Activated CD8-positive, alpha-beta T cell treated with anti-CD3 and anti-CD28 coated beads for 36 hours (primary cell): ENCODE measurements at regions of chr11 and their contacts with region 1.

Region 1: GRCh38 chr11:58719406-58720117 is 12.2 kb downstream of the GLYAT start:
- DNase-seq: no peak
- ATAC-seq: no peak
- H3K4me3 Mint-ChIP-seq: no peak overlapping the region
- H3K27ac Mint-ChIP-seq: no peak overlapping the region
- H3K4me1 Mint-ChIP-seq: no peaks in the 10 kb centered on the region
- H3K27me3 Mint-ChIP-seq: no peaks in the 10 kb centered on the region
- CTCF ChIP-seq: no peak

Region 2: DNA sequence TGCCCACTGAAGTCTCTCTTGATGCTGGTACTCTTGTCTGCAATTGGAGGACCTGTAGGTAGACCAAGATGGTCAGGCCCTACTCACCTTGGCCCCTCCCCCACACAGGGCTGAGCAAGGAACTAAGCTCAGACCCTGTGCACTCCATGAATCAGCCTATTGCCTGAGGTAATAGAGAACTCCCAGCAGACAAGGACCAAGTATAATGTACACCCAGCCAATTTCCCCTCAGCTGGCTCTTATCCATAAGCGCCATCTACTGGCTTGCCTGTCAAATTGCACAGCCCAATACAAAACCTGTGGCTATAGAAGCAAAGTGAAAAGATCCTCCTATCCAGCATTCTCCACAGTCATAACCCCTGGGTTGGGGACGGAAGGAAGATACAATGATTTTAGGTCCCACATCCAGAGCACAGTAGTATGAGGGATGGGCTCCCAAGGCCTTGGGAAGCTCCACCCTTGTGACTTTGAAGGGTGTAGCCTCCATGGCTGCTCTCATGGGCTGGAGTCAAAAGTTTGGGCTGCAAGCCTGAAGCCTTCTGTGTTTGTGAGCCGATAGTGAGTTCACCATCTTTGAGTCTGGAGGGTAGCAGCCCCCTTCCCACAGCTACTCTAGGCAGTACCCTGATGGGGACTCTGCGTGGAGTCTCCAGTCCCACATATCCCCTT is 68.9 kb after region 1 on chr11:
- CTCF ChIA-PET with region 1: no interaction called
- POLR2A ChIA-PET with region 1: no interaction called
- intact Hi-C with region 1: loop called (anchors 10 kb)
- DNase-seq: peak; percentile 31
- ATAC-seq: peak; percentile 98
- H3K4me3 Mint-ChIP-seq: no peak overlapping the region
- H3K27ac Mint-ChIP-seq: no peak overlapping the region
- H3K4me1 Mint-ChIP-seq: peaks cover 2% of the 10 kb centered on the region
- H3K27me3 Mint-ChIP-seq: peaks cover 5% of the 10 kb centered on the region
- CTCF ChIP-seq: peak; percentile 86